ENCODE measurements at regions of chr14 and their contacts with region 1.

Region 1: DNA sequence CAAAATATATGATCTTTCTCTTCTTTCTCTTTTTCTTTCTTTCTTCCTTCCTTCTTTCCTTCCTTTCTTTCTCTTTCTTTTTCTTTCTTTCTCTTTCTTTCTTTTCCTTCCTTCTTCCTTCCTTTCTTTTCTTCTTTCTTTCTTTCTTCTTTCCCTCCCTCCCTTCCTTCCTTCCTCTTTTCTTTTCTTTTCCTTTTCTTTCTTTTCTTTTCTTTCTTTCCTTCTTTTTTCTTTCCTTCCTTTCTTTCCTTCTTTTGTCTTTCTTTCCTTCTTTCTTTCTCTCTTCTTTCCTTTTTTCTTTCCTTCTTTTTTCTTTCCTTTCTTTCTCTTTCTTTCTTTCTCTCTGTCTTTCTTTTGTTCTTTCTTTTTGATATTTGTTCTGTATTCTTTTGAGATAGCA is 1356.0 kb upstream of the SEL1L start:
- DNase-seq: no peak
- ATAC-seq: no peak

Region 2: GRCh38 chr14:82872494-82872893 is 17.2 kb before region 1 on chr14:
- intact Hi-C with region 1: no loop called
- DNase-seq: no peak
- ATAC-seq: no peak

Region 3: GRCh38 chr14:82987502-82988124 is 97.9 kb after region 1 on chr14:
- intact Hi-C with region 1: no loop called
- DNase-seq: no peak
- ATAC-seq: no peak

Region 4: DNA sequence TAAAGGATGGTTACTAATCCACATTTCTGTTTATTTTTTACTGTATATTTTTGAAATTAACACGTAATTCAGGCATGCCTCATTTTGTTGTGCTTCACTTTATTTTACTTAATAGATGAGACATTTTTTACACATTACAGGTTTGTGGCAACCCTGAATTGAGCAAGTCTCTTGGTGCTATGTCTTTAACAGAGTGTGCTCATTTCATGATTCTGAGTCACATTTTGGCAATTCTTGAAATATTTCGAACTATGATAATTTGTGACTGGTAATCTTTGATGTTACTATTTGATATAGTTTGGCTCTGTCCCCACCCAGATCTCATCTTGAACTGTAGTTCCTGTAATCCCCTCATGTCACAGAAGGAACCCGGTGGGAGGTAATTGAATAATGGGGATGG is 1519.7 kb after region 1 on chr14:
- intact Hi-C with region 1: loop called (anchors 5 kb)
- DNase-seq: no peak
- ATAC-seq: no peak